ENCODE measurements at regions of chr22 and their contacts with region 1.

Region 1: DNA sequence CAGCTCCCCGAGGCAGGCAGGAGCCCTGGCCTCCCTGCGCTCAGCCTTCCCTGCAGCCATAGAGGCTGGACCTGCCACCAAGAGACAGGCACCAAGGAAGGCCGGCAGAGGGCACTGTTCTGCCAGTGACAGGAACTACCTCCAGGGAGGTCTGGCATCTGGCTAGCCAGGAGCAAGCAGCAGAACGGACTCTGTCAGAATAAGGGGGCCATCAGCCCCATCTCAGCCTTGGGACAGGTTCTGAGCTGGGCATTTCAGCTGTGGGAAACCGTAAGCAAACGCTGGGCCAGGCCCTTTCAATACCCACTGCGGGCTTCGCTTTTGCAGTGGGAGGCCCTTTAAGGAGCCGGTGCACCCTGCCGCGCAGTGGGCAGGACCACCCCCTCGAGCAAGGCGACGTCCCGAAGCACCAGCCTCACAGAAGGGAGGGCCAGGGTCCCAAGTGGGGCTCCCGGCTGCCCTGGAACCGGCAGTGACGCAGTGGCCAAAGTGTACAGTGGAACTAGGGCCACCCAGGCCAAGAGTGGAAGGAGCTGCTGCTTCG is 18.2 kb downstream of the IFT27 start:
- DNase-seq: peak; percentile 44 to 72
- ATAC-seq: peak; percentile 90 to 98
- H3K4me3 ChIP-seq: no peak overlapping the region
- H3K27ac ChIP-seq: no peak overlapping the region
- H3K4me1 ChIP-seq: no peaks in the 10 kb centered on the region
- CTCF ChIP-seq: peak; percentile 52
- EP300 ChIP-seq: no peak
- POLR2A ChIP-seq: no peak
- RAD21 ChIP-seq: peak; percentile 51 to 59; a peak in 4 of 5 replicates

Region 2: GRCh38 chr22:36439481-36440271 is 318.1 kb before region 1 on chr22:
- CTCF ChIA-PET with region 1: no interaction called
- POLR2A ChIA-PET with region 1: no interaction called
- DNase-seq: peak; percentile 55 to 85
- ATAC-seq: peak; percentile 86 to 92
- H3K4me3 ChIP-seq: no peak overlapping the region
- H3K27ac ChIP-seq: peak overlapping the region; percentile 69 to 79
- H3K4me1 ChIP-seq: peaks cover 48% of the 10 kb centered on the region
- CTCF ChIP-seq: no peak
- EP300 ChIP-seq: no peak
- POLR2A ChIP-seq: no peak
- RAD21 ChIP-seq: no peak

Region 3: GRCh38 chr22:36546092-36546804 is 211.5 kb before region 1 on chr22:
- CTCF ChIA-PET with region 1: interaction called, 13 read pairs
- POLR2A ChIA-PET with region 1: no interaction called
- DNase-seq: peak; percentile 67 to 78
- ATAC-seq: peak; percentile 76 to 84
- H3K4me3 ChIP-seq: peak overlapping the region; percentile 36
- H3K27ac ChIP-seq: peak overlapping the region; percentile 58 to 79
- H3K4me1 ChIP-seq: peaks cover 34% of the 10 kb centered on the region
- CTCF ChIP-seq: peak; percentile 80
- EP300 ChIP-seq: no peak
- POLR2A ChIP-seq: no peak
- RAD21 ChIP-seq: peak; percentile 73 to 94

Region 4: DNA sequence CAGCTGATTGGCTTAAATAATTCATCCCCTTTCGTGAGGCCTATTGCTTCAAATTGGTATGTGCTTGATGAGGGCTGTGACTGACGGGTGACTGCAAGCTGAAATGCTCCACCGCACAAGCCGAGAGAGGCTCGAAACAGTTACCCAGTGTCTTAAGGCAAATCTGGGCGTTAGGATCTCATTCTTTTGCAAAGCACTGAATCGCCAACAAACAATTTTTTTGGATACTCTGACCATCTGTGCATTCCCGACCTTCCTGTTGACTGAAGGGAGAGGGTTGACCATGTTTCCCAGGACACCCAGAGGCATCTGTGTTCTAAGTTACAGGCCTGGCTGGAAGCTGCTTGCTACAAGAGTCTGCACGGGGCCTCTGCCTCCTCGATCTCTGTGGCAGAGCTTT is 86.3 kb before region 1 on chr22:
- CTCF ChIA-PET with region 1: no interaction called
- POLR2A ChIA-PET with region 1: no interaction called
- DNase-seq: no peak
- ATAC-seq: no peak
- H3K4me3 ChIP-seq: no peak overlapping the region
- H3K27ac ChIP-seq: no peak overlapping the region
- H3K4me1 ChIP-seq: no peaks in the 10 kb centered on the region
- CTCF ChIP-seq: no peak
- EP300 ChIP-seq: no peak
- POLR2A ChIP-seq: no peak
- RAD21 ChIP-seq: no peak

Region 5: DNA sequence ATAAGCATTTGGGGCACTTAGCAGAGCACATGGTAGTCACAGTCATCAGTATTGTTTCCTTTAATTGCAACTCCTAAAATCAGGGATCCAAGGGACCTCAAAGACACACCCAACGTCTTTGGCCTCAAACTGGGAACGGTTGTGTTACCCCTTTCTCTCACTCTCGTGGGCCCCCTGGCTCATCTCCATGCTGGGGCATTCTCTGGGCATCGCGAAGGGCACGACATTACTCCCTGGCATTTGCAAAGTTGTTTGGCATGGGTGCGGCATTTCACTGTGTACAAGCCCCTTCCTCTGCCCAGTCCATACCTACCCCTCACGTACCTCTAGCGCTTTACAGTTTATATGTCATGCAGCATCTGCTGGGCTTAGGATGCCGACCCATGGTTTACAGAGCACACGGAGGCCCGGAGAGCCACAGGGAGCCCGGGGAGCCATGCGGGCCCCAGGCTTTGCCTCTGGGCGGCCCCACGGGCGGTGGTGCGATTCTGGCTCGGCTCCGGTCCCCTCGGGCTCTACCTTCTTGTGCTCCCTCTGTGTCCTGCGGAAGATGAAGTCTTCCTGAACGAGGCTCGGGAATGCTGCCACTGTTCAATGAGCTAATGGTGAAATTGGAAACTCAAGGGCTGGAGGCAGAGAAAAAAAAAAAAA is 32.3 kb before region 1 on chr22:
- CTCF ChIA-PET with region 1: interaction called, 18 read pairs
- POLR2A ChIA-PET with region 1: no interaction called
- DNase-seq: no peak
- ATAC-seq: no peak
- H3K4me3 ChIP-seq: no peak overlapping the region
- H3K27ac ChIP-seq: no peak overlapping the region
- H3K4me1 ChIP-seq: no peaks in the 10 kb centered on the region
- CTCF ChIP-seq: no peak
- EP300 ChIP-seq: no peak
- POLR2A ChIP-seq: no peak
- RAD21 ChIP-seq: no peak

Region 6: GRCh38 chr22:36741204-36741793 is 16.4 kb before region 1 on chr22:
- CTCF ChIA-PET with region 1: interaction called, 25 read pairs
- POLR2A ChIA-PET with region 1: no interaction called
- DNase-seq: peak; percentile 20 to 36
- ATAC-seq: peak in 1 of 2 experiments; percentile 72; a peak in 3 of 6 replicates
- H3K4me3 ChIP-seq: no peak overlapping the region
- H3K27ac ChIP-seq: no peak overlapping the region
- H3K4me1 ChIP-seq: no peaks in the 10 kb centered on the region
- CTCF ChIP-seq: no peak
- EP300 ChIP-seq: no peak
- POLR2A ChIP-seq: no peak
- RAD21 ChIP-seq: no peak

Region 7: DNA sequence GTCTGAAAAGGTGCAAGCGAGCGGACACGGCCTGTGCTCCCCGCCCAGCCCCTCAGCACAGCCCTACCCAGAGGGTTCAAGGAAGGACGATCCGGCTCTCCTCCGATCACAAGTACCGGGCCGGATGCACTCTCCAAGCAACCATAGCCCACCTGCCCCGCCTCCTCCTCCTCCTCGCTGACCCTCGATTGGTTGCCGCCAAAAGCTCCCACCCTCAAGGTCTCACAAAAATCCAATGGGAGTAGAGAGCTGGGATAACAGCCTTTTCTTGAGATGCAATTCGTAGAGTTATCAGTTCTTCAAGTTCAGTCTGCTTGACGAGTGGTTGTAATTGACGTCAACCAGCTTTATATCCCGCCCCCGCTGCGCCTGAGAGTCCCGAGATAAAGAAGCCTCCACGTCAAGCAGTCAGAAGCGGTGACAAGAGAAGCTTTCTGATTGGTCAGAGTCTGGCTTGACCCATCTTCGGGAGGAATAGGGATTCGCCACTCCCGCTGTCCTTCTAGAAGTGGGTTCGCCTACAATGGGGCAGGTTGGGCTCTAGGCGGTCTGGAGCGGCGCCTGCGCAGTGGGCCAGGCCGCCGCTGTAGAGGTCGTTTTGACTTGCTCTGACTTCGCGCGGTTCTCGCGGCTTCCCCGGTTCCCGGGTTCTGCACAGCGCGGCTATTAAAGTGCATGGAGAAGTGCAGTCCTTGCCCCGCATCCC is 18.4 kb after region 1 on chr22 and contains the start of gene IFT27:
- CTCF ChIA-PET with region 1: interaction called, 37 read pairs
- POLR2A ChIA-PET with region 1: interaction called, 3 read pairs
- DNase-seq: peak; percentile 97 to 99
- ATAC-seq: peak; percentile 98
- H3K4me3 ChIP-seq: peak within 1 kb of the TSS; percentile 89
- H3K27ac ChIP-seq: peak within 1 kb of the TSS; percentile 86 to 93
- H3K4me1 ChIP-seq: peaks cover 17% of the 10 kb centered on the region; the same call in 2 of the 3 replicates
- CTCF ChIP-seq: no peak
- EP300 ChIP-seq: no peak
- POLR2A ChIP-seq: peak; percentile 66
- RAD21 ChIP-seq: no peak
- polyA plus RNA-seq, gene IFT27: 24.6 and 26.4 TPM in 2 replicates

Region 8: GRCh38 chr22:36884349-36885117 is 126.8 kb after region 1 on chr22:
- CTCF ChIA-PET with region 1: no interaction called
- POLR2A ChIA-PET with region 1: no interaction called
- DNase-seq: no peak
- ATAC-seq: no peak; a peak in 1 of 6 replicates
- H3K4me3 ChIP-seq: no peak overlapping the region
- H3K27ac ChIP-seq: no peak overlapping the region
- H3K4me1 ChIP-seq: peaks cover 11% of the 10 kb centered on the region; the same call in 2 of the 3 replicates
- CTCF ChIP-seq: no peak
- EP300 ChIP-seq: no peak
- POLR2A ChIP-seq: no peak
- RAD21 ChIP-seq: no peak

Measured in A549 (cell line).